ENCODE measurements at regions of chr11 and their contacts with region 1.

Region 1: DNA sequence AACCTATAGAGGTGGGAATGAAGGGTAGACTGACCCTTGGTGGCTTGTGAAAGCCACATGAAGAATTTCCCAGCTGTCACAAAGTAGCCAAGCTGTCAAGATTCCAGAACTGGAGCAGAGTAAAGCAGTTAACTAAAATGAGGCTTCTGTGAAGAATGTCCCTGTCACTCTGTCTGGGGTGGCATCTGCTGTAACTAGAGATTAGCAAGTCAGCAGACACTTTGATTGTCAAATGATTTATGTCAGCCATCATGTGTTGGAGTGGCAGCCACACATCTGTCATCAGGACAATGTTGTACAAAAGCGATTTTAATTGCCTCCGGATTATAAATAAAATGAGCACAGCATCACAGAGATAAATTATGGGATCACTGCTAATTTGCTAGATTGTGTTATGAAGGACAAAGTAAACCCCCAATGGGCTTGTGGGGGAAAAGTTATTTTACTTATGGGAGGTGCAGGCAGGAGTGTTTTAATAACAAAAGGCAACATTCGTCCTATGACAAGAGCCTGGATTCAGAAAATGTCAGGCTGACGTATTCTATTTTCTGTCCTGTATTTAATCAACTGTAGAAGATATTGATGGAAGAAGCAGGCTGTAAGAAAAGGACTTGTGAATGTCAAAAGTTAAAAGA is 270.9 kb downstream of the FAM181B start:
- H3K4me3 Mint-ChIP-seq: no peak overlapping the region
- H3K27ac Mint-ChIP-seq: no peak overlapping the region
- H3K4me1 Mint-ChIP-seq: no peaks in the 10 kb centered on the region
- H3K27me3 Mint-ChIP-seq: no peaks in the 10 kb centered on the region

Region 2: DNA sequence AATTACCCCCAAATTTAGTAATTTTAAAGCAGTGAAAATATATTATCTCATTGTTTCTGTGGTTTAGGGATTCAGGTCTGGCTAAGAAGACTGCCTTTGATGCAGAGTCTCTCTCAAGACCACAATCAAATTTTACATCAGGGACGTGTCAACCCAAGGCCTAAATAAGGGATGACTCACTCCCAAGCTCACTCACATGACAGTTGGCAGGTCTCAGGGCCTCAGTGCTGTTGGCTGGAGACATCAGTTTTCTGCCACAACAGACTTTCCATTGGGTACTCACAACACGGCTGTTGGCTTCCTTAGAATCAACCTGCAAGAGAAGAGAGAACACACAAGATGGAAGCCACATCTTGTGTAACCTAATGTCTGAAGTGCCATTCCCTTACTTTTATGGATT is 106.4 kb before region 1 on chr11:
- intact Hi-C with region 1: no loop called
- H3K4me3 Mint-ChIP-seq: no peak overlapping the region
- H3K27ac Mint-ChIP-seq: no peak overlapping the region
- H3K4me1 Mint-ChIP-seq: no peaks in the 10 kb centered on the region
- H3K27me3 Mint-ChIP-seq: no peaks in the 10 kb centered on the region

Region 3: DNA sequence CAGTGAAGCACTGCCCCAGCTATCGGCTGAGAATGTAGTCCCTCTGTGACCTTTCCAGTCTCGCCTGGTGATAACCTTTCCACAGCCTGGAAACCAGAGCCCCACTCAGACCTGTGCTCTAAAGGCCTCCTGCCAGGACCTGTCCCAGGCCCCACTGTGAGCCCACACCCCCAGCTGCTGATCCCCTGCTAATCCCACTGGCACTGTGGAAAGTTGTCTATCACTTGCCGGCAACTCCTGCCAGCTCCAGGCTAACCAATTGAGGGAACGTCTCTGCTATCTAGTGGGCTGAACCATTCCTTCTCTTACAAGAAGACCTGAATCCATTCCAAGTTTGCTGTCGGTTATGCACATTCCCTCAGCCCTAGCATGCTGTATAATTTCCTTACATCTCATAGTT is 57.3 kb before region 1 on chr11:
- intact Hi-C with region 1: loop called (anchors 10 kb)
- H3K4me3 Mint-ChIP-seq: no peak overlapping the region
- H3K27ac Mint-ChIP-seq: no peak overlapping the region
- H3K4me1 Mint-ChIP-seq: no peaks in the 10 kb centered on the region
- H3K27me3 Mint-ChIP-seq: no peaks in the 10 kb centered on the region

Measured in dendritic cell treated with granulocyte-macrophage colony-stimulating factor and Interleukin-4, amounts not matched to agents 40 ng/mL and 50 ng/mL, for 4 days (primary cell).